Lower lobe of right lung (tissue), 2 donors: ENCODE measurements at regions of chr2 and their contacts with region 1.

Region 1: GRCh38 chr2:170486730-170487129 is 228.4 kb upstream of the SP5 start:
- DNase-seq: no peak
- ATAC-seq: no peak
- H3K4me3 ChIP-seq: no peak overlapping the region
- H3K27ac ChIP-seq: no peak overlapping the region
- H3K4me1 ChIP-seq: no peaks in the 10 kb centered on the region
- H3K27me3 ChIP-seq: no peaks in the 10 kb centered on the region
- CTCF ChIP-seq: no peak

Region 2: DNA sequence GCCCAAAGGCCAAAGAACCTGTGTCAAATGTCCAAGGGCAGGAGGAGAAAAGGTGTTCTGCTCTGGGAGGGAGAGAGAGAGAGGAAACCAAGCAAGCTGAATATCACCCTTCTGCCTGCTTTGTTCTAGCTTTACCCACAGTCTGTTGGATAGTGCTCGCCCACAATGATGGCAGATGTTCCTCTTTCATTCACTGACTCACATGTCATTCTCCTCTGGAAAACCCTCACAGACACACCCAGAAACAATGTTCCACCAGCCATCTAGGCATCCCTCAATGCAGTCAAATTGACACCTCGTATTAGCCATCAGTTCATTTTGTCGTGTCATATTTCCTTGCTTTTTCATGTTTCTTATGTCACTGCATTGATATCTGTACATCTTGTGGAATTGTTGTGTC is 509.2 kb before region 1 on chr2:
- intact Hi-C with region 1: no loop called
- DNase-seq: no peak
- ATAC-seq: no peak
- H3K4me3 ChIP-seq: no peak overlapping the region
- H3K27ac ChIP-seq: no peak overlapping the region
- H3K4me1 ChIP-seq: no peaks in the 10 kb centered on the region
- H3K27me3 ChIP-seq: no peaks in the 10 kb centered on the region
- CTCF ChIP-seq: no peak

Region 3: GRCh38 chr2:170815746-170816503 is 329.2 kb after region 1 on chr2:
- intact Hi-C with region 1: loop called (anchors 10 kb)
- DNase-seq: peak; percentile 68
- ATAC-seq: peak; percentile 76 to 80
- H3K4me3 ChIP-seq: peak overlapping the region; percentile 47
- H3K27ac ChIP-seq: no peak overlapping the region
- H3K4me1 ChIP-seq: peaks cover 66% of the 10 kb centered on the region
- H3K27me3 ChIP-seq: peaks cover 81% of the 10 kb centered on the region
- CTCF ChIP-seq: peak; percentile 69

Region 4: GRCh38 chr2:170862286-170862902 is 375.7 kb after region 1 on chr2:
- intact Hi-C with region 1: no loop called
- DNase-seq: no peak
- ATAC-seq: no peak
- H3K4me3 ChIP-seq: no peak overlapping the region
- H3K27ac ChIP-seq: no peak overlapping the region
- H3K4me1 ChIP-seq: no peaks in the 10 kb centered on the region
- H3K27me3 ChIP-seq: no peaks in the 10 kb centered on the region
- CTCF ChIP-seq: no peak